Naive thymus-derived CD4-positive, alpha-beta T cell (primary cell): ENCODE measurements at regions of chr11 and their contacts with region 1.

Region 1: GRCh38 chr11:117107701-117108590 is 9.7 kb upstream of the SIK3 start:
- DNase-seq: no peak
- ATAC-seq: no peak
- H3K4me3 ChIP-seq: no peak overlapping the region
- H3K4me3 Mint-ChIP-seq: no peak overlapping the region
- H3K27ac ChIP-seq: no peak overlapping the region
- H3K27ac Mint-ChIP-seq: no peak overlapping the region
- H3K4me1 ChIP-seq: no peaks in the 10 kb centered on the region
- H3K4me1 Mint-ChIP-seq: peaks cover 0 to 5% (median 0%) of the 10 kb centered on the region in 7 donors
- H3K27me3 ChIP-seq: no peaks in the 10 kb centered on the region
- H3K27me3 Mint-ChIP-seq: peaks cover 0 to 5% (median 0%) of the 10 kb centered on the region in 5 donors

Region 2: DNA sequence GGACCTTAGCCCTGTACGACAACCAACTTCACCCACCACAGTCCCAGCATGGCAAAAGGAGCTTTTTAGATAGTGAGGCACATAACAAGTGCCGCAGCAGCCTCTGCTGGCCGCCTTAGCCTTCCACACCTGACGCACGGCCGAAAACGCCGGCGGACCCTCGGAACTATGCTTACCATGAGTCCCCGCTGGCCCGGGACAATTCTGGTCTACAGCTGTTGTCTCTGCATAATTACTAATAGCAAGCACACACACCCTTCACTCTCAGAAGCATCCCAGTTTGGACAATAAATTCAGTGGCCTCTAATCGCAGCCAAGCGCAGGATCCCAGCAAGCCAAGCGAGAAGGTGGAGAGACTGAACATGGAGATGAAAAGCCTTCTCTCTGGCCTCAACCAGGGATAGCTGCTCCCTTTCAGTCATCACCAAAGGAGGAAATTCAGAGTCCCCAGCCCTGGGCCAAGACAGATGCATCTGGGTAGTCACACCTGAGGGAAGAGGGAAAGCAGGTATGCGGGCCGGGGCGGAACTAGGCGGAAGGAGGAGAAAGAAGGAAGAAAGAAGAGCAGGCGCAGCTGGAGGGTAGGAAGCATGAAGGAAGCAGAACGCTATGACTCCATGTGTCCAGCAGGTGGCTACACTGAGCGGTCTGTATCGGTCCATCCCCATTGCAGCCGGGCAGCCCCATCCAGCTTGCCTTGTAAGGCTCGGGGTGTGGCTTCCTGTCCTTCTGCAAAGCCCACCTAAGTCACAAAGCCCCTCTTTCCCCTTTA is 375.5 kb before region 1 on chr11:
- CTCF ChIA-PET with region 1: interaction called, 5 read pairs
- POLR2A ChIA-PET with region 1: interaction called, 3 read pairs
- intact Hi-C with region 1: loop called (anchors 1 kb)
- DNase-seq: peak in 7 of 9 donors; percentile 24 to 56 (median 40)
- ATAC-seq: peak; percentile 91
- H3K4me3 ChIP-seq: no peak overlapping the region
- H3K4me3 Mint-ChIP-seq: peak overlapping the region in 1 of 10 donors; percentile 42
- H3K27ac ChIP-seq: no peak overlapping the region
- H3K27ac Mint-ChIP-seq: peak overlapping the region in 2 of 9 donors; percentile 6 to 57
- H3K4me1 ChIP-seq: peaks cover 0 to 5% of the 10 kb centered on the region in 2 donors
- H3K4me1 Mint-ChIP-seq: peaks cover 4 to 15% (median 8%) of the 10 kb centered on the region in 7 donors
- H3K27me3 ChIP-seq: no peaks in the 10 kb centered on the region
- H3K27me3 Mint-ChIP-seq: peaks cover 0 to 6% (median 0%) of the 10 kb centered on the region in 5 donors

Region 3: GRCh38 chr11:116835791-116836631 is 271.9 kb before region 1 on chr11:
- CTCF ChIA-PET with region 1: interaction called, 17 read pairs
- POLR2A ChIA-PET with region 1: no interaction called
- intact Hi-C with region 1: loop called (anchors 1 kb)
- DNase-seq: peak; percentile 66 to 85 (median 80)
- ATAC-seq: peak; percentile 97
- H3K4me3 ChIP-seq: peak overlapping the region; percentile 71
- H3K4me3 Mint-ChIP-seq: peak overlapping the region; percentile 68 to 84 (median 80)
- H3K27ac ChIP-seq: peak overlapping the region; percentile 41
- H3K27ac Mint-ChIP-seq: peak overlapping the region in 6 of 9 donors; percentile 31 to 75 (median 50)
- H3K4me1 ChIP-seq: peaks cover 4 to 9% of the 10 kb centered on the region in 2 donors
- H3K4me1 Mint-ChIP-seq: peaks cover 4 to 17% (median 14%) of the 10 kb centered on the region in 7 donors
- H3K27me3 ChIP-seq: no peaks in the 10 kb centered on the region
- H3K27me3 Mint-ChIP-seq: peaks cover 0 to 4% (median 0%) of the 10 kb centered on the region in 5 donors

Region 4: DNA sequence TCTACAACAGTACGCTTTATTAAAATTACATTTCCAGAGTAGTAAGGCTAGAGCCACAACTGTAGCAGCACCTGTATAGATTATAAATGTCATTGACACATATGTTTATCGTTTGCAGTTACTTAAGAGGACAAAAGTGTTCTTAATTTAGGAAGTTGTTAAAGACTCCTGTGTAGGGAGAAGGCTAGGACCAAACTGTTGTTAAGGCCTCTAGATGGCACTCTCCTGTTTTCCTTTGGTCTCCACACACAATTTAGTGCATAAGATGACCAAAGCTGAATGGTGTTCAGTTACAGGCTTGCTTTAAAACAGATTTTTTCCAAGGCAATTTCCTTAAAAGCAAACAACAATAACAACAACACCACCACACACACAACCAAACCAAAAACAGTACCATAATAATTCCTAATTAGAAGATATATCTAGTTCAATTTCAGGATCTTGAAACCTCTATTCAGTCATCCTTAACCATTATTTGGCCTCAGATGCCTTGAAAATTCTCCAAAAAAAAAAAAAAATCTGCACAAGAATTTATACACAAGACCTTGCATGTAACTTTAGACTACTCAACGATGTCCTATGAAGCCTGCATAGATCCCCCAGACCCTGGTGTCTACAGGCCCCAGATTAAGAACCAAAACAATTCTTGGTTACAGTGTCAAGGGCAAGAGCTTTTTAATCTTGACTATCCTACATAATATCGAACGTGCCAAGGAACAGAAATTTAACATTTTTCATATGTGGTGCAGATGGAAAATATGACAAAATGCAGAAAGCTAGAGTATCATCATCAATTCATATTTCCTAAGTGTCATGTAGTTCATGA is 227.9 kb before region 1 on chr11:
- CTCF ChIA-PET with region 1: interaction called, 25 read pairs
- POLR2A ChIA-PET with region 1: no interaction called
- intact Hi-C with region 1: loop called (anchors 1 kb)
- DNase-seq: peak in 7 of 9 donors; percentile 31 to 54 (median 39)
- ATAC-seq: peak; percentile 84
- H3K4me3 ChIP-seq: no peak overlapping the region
- H3K4me3 Mint-ChIP-seq: no peak overlapping the region
- H3K27ac ChIP-seq: no peak overlapping the region
- H3K27ac Mint-ChIP-seq: peak overlapping the region in 4 of 9 donors; percentile 23 to 67 (median 46)
- H3K4me1 ChIP-seq: no peaks in the 10 kb centered on the region
- H3K4me1 Mint-ChIP-seq: peaks cover 0 to 18% (median 9%) of the 10 kb centered on the region in 7 donors
- H3K27me3 ChIP-seq: no peaks in the 10 kb centered on the region
- H3K27me3 Mint-ChIP-seq: no peaks in the 10 kb centered on the region

Region 5: GRCh38 chr11:116895048-116895757 is 212.7 kb before region 1 on chr11:
- CTCF ChIA-PET with region 1: interaction called, 7 read pairs
- POLR2A ChIA-PET with region 1: no interaction called
- intact Hi-C with region 1: loop called in 1 of 2 experiments (anchors 1 kb)
- DNase-seq: peak in 4 of 9 donors; percentile 6 to 26 (median 14)
- ATAC-seq: peak; percentile 64
- H3K4me3 ChIP-seq: no peak overlapping the region
- H3K4me3 Mint-ChIP-seq: no peak overlapping the region
- H3K27ac ChIP-seq: no peak overlapping the region
- H3K27ac Mint-ChIP-seq: peak overlapping the region in 6 of 9 donors; percentile 41 to 84 (median 60)
- H3K4me1 ChIP-seq: peaks cover 5 to 8% of the 10 kb centered on the region in 2 donors
- H3K4me1 Mint-ChIP-seq: peaks cover 11 to 28% (median 17%) of the 10 kb centered on the region in 7 donors
- H3K27me3 ChIP-seq: no peaks in the 10 kb centered on the region
- H3K27me3 Mint-ChIP-seq: no peaks in the 10 kb centered on the region

Region 6: DNA sequence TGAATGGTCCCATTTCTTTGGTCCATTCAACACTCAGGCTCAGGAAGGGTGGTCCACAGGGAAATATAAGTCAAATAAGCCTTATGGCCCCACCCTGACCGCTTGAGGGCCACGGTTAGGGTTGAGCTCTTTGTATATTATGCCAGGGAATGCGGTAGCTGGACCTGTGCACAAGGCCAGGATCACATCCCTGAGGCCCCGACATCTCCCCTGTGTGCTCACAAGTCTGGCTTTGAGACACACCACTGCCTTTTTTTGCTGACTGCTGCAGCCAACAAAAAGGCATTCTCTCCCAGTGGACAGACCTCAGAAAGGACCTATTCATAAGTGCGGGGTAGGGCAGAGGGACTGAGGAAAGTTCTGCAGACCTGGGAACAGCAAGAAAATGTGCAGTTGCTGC is 67.1 kb after region 1 on chr11:
- CTCF ChIA-PET with region 1: no interaction called
- POLR2A ChIA-PET with region 1: no interaction called
- intact Hi-C with region 1: no loop called
- DNase-seq: peak in 1 of 9 donors; percentile 17
- ATAC-seq: no peak
- H3K4me3 ChIP-seq: no peak overlapping the region
- H3K4me3 Mint-ChIP-seq: no peak overlapping the region
- H3K27ac ChIP-seq: no peak overlapping the region
- H3K27ac Mint-ChIP-seq: peak overlapping the region in 2 of 9 donors; percentile 36 to 71
- H3K4me1 ChIP-seq: peaks cover 6 to 15% of the 10 kb centered on the region in 2 donors
- H3K4me1 Mint-ChIP-seq: peaks cover 14 to 34% (median 26%) of the 10 kb centered on the region in 7 donors
- H3K27me3 ChIP-seq: no peaks in the 10 kb centered on the region
- H3K27me3 Mint-ChIP-seq: no peaks in the 10 kb centered on the region